Mammary epithelial cell (primary cell): ENCODE measurements at regions of chr1 and their contacts with region 1.

Region 1: DNA sequence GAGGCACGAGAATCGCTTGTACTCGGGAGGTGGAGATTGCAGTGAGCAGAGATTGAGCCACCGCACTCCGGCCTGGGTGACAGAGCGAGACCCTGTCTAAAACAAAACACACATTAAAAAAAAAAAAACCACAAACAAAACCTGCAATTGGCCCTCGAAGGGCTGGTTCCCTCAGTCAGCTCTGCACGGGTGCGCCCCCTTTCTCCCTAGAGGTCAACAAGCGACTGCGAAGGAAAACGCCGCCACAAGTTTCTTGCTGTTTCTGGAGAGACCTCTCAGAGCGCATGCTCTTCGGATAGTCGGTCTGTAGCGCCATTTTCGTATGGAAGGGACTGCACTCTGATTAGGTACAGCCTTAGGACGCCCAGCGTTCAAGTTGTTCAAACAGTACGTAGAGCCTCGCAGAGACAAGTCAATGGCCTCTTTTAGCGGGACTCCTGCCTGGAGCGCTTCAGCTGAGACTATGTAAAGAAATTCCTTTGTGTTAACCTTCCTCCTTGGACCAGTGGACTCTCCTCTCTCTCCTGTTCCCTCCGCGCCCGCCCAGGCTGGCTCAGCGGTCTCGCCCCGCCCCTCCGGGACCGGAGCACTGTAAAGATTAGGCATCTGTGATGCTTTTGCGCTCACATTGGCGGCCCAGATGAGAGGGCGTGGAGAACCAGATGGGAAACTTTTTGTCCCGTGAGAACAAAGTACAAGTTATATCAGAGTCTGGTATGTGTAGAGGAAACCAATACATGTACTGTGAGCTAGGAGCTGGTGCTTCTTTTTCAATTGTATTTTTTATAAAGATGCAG is 1.0 kb upstream of the CDC14A start:
- DNase-seq: peak; percentile 93
- H3K4me3 ChIP-seq: peak overlapping the region; percentile 84 to 94 (median 88)
- H3K27ac ChIP-seq: peak overlapping the region; percentile 77
- H3K4me1 ChIP-seq: peaks cover 15% of the 10 kb centered on the region
- H3K27me3 ChIP-seq: no peaks in the 10 kb centered on the region
- CTCF ChIP-seq: peak; percentile 16 to 18

Region 2: GRCh38 chr1:100265931-100266740 is 85.2 kb before region 1 on chr1 and contains the start of gene RTCA:
- CTCF ChIA-PET with region 1: no interaction called
- dilution Hi-C with region 1: no loop called
- in situ Hi-C with region 1: no loop called
- intact Hi-C with region 1: loop called (anchors 1 kb)
- DNase-seq: peak; percentile 91
- H3K4me3 ChIP-seq: peak within 1 kb of the TSS; percentile 88 to 97 (median 93)
- H3K27ac ChIP-seq: peak within 1 kb of the TSS; percentile 75
- H3K4me1 ChIP-seq: peaks cover 15% of the 10 kb centered on the region
- H3K27me3 ChIP-seq: no peaks in the 10 kb centered on the region
- CTCF ChIP-seq: no peak
- total RNA-seq, gene RTCA: 31.5 to 60.2 TPM

Region 3: DNA sequence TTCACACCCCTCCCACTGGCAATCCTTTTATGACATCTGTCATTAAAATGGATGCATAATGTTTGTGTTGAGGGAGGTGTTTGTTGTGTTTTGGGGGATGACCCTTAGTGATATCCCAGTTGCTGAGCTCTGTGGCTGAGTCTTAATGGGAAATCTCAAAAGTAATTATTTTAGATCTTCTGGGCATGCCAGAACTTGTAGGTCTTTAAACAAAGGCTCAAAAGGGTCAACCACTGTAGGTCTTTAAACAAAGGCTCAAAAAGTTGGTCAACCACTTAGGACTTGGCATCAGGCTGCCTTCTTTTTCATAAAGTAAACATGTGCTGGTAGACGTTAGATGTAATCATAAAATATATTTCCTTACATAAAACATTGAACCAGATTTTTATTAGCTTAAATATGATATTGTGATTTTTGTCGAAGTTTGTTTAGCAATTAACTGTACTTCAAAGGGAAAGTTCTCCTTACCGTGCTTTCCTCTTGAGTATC is 79.1 kb after region 1 on chr1:
- CTCF ChIA-PET with region 1: no interaction called
- dilution Hi-C with region 1: no loop called
- in situ Hi-C with region 1: no loop called
- intact Hi-C with region 1: no loop called
- DNase-seq: peak; percentile 47
- H3K4me3 ChIP-seq: no peak overlapping the region
- H3K27ac ChIP-seq: no peak overlapping the region
- H3K4me1 ChIP-seq: peaks cover 7% of the 10 kb centered on the region
- H3K27me3 ChIP-seq: no peaks in the 10 kb centered on the region
- CTCF ChIP-seq: no peak

Region 4: GRCh38 chr1:100556925-100557605 is 205.8 kb after region 1 on chr1:
- CTCF ChIA-PET with region 1: no interaction called
- dilution Hi-C with region 1: no loop called
- in situ Hi-C with region 1: no loop called
- intact Hi-C with region 1: no loop called
- DNase-seq: no peak
- H3K4me3 ChIP-seq: no peak overlapping the region
- H3K27ac ChIP-seq: no peak overlapping the region
- H3K4me1 ChIP-seq: no peaks in the 10 kb centered on the region
- H3K27me3 ChIP-seq: no peaks in the 10 kb centered on the region
- CTCF ChIP-seq: no peak